ENCODE measurements at regions of chr1 and their contacts with region 1.

Region 1: DNA sequence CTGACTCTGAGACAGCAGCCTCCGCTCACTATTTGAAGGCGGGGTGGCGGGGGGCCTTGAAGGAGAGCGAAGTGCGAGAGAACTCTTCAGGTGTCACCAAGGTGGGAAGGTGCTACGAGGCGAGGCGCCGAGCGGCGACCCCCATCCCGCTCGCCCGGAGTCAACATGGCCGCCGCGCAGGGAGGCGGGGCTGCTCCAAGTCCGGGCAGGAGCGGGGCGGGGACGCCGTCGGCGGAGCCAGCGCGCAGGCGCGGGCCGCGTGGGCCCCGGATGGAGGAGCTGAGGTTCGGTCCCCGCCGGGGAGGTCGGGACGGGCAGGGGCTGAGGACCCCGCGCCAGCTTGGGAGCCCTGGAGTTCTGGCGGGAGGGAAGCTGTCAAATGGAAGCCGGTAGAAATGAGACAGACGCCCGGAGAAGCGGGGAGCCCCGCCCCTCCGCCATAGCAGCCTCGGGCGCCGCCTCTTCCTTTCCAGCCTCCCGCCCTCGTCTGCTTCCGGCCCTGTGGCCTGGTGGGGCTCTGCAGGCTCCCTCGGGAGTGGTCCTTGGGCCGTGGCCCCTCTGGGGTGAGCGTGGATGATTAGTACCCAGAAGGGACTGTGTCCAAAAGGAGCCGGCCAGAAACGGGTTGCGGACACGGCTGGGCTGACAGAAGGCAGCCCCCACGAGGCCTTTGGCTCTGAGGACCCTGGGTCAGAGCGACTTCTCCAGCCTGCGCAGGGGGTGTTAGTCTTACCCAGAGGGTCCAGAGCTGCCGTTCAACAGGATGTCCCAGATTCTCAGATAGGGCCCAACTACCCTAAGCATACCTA is at the start of gene PIGV:
- DNase-seq: peak; percentile 28
- H3K4me3 ChIP-seq: peak within 1 kb of the TSS; percentile 59 to 92 (median 78)
- H3K27ac ChIP-seq: peak within 1 kb of the TSS; percentile 98 to 100 (median 98)
- H3K4me1 ChIP-seq: peaks cover 28 to 64% (median 38%) of the 10 kb centered on the region in 3 donors
- H3K27me3 ChIP-seq: no peaks in the 10 kb centered on the region
- CTCF ChIP-seq: peak in 5 of 6 experiments; percentile 15 to 59 (median 46)
- POLR2A ChIP-seq: peak in 2 of 4 donors; percentile 54 to 73
- total RNA-seq, gene PIGV: 9.9 to 20.9 (median 13.1) TPM

Region 2: DNA sequence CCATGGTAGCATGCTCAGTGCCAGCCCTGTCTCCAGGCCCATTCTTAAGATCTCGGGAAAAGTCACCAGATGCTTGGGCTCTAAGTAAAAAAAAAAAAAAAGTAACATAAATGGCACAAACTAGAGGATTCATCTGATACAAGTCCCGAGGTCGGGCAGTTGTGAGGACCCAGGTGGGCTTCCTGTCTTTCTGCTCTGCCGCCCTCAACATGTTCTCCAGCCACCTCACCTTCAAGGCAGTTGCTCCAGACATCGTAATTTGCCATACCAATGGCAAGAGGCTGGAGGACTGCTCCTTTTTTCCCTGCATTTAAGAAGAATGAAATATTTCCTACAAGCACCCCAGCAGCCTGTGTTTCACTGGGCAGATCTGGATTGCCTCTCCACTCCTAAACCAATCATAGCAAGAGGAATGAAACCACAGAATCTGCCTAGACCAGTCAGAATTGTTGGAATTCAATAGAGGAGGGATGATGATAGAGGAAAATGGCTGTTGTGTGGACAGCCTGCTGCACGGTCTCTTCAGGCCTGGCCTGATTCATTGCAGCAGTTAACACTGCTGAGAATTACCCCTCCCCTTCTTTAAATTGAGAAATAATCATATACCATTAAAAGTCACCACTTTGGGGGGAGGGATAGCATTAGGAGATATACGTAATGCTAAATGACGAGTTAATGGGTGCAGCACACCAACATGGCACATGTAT is 310.3 kb before region 1 on chr1:
- intact Hi-C with region 1: no loop called
- DNase-seq: no peak
- H3K4me3 ChIP-seq: no peak overlapping the region
- H3K27ac ChIP-seq: no peak overlapping the region
- H3K4me1 ChIP-seq: peaks cover 8 to 17% (median 10%) of the 10 kb centered on the region in 3 donors
- H3K27me3 ChIP-seq: no peaks in the 10 kb centered on the region
- CTCF ChIP-seq: no peak
- POLR2A ChIP-seq: no peak

Region 3: DNA sequence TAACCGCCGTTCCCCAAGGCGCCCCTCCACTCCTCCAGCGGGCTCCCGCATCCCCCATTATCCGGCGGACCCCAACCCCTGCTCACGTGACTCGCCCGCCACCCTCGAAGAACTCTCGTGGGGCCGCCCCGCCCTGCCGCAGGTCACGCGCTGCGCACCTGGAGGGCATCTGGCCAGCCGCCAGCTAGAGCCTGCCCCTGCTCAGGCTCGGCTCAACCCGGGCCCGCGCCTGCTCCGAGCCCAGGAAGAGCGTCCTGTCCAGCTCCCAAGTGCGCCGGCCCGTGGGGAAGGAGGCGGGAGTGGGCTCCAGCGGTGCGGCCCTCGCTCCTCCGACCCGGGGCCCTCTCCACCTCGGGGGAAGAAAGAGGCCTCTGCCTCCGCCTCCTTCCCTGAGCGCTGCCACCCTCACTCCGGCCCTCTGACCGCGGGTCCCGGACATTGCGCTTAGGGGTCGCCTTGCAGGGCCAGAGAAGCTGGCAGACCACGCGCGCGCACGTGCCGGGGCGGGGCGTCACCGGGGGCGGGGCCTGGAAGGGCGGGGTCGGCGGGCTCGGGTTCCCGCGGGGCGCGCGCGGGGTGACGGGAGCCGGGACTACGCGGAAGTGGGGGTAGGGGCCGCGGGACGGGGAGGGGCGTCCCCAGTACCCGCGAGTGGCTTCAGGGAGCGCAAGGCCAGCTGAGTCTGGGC is 287.3 kb before region 1 on chr1:
- intact Hi-C with region 1: loop called (anchors 10 kb)
- DNase-seq: peak; percentile 66
- H3K4me3 ChIP-seq: peak overlapping the region; percentile 71 to 78 (median 74)
- H3K27ac ChIP-seq: peak overlapping the region; percentile 91 to 96 (median 94)
- H3K4me1 ChIP-seq: peaks cover 0 to 21% (median 10%) of the 10 kb centered on the region in 3 donors
- H3K27me3 ChIP-seq: no peaks in the 10 kb centered on the region
- CTCF ChIP-seq: no peak
- POLR2A ChIP-seq: peak in 2 of 4 donors; percentile 57 to 66

Region 4: GRCh38 chr1:26602378-26602959 is 185.4 kb before region 1 on chr1:
- intact Hi-C with region 1: loop called (anchors 2 kb)
- DNase-seq: no peak
- H3K4me3 ChIP-seq: no peak overlapping the region
- H3K27ac ChIP-seq: no peak overlapping the region
- H3K4me1 ChIP-seq: peaks cover 0 to 19% (median 4%) of the 10 kb centered on the region in 3 donors
- H3K27me3 ChIP-seq: peaks cover 0 to 28% (median 0%) of the 10 kb centered on the region in 4 donors
- CTCF ChIP-seq: peak; percentile 76 to 94 (median 88)
- POLR2A ChIP-seq: no peak

Region 5: DNA sequence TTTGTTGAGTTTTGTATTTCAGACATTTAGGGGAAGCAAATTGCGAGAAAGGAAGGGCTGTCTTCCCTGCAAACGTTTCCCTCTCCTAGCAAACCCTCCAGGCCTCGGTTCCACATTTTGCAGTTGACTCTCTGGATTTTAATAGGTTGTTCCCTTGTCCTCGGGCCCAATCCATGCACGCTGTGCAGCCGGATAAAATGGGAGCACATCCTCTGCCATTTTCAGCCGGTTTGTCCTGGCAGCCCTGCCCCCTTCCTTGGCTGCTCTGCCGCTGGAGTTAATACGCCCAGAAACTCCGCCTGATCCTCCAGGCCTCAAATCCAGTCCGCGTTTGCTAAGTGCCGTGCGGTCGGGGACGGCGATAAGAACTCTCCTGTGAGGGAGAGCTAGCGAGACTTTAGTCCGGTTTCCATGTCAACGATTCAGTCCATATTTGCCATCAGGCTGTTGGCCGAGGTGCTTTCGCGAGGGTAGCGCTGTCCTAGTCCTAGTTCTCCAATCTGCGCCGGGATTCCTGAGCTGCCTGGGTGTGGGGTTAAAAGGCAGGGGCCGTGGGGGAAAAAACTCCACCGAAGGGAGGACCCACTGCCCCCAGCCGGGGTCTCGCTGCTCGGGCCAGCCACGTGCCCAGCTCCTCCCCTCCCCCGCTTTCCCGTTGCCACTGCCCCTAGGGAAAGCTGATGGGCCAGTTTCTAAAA is 95.0 kb before region 1 on chr1:
- intact Hi-C with region 1: loop called (anchors 5 kb)
- DNase-seq: peak; percentile 66
- H3K4me3 ChIP-seq: peak overlapping the region; percentile 51 to 74 (median 64)
- H3K27ac ChIP-seq: peak overlapping the region; percentile 93 to 99 (median 98)
- H3K4me1 ChIP-seq: peaks cover 20 to 43% (median 27%) of the 10 kb centered on the region in 3 donors
- H3K27me3 ChIP-seq: no peaks in the 10 kb centered on the region
- CTCF ChIP-seq: peak in 2 of 6 experiments; percentile 5 to 6
- POLR2A ChIP-seq: peak in 1 of 4 donors; percentile 55

Region 6: DNA sequence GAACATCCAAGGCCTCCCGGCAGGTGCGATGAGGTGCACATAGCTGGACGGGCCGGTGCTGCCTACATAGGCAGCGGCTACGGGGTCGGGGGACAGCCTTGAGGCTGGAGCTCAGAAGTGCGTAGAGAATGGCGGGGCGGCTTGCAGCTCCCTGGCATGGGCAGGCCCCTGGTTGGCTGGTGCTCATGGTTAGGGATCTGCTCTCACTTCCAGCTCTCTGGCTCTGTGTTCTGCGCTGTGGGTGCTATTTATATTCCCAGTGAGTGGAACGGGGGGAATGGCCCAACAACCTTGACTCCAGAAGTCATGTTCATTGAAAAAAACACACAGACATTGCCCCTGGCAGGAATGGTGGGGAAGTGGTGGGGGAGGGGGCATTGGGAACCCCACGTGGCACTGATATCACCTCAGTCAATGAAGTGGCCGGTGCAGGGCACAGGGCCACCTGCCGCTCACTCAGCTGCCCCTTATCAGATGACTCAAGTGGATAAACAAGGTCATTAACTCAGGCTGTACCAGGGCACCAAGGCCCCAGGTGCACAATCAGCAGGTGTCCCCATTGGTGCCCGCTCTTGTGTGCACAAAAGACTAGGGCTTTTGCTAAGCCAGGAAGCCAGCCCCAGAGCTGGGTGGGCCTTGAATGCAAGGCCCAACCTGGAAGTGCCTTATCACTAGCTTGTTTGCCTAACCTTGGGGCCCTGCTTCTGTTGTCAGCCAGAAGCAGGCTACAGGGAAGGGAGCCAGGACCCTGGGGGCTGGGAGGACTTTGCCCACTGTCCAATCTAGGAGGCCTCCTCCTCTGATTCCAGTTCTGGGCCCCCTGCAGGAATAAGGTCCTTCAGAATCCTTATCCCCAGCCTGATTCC is 126.1 kb after region 1 on chr1 and contains the start of gene NR0B2:
- intact Hi-C with region 1: no loop called
- DNase-seq: no peak
- H3K4me3 ChIP-seq: no peak within 1 kb of the TSS
- H3K27ac ChIP-seq: no peak within 1 kb of the TSS
- H3K4me1 ChIP-seq: no peaks in the 10 kb centered on the region
- H3K27me3 ChIP-seq: no peaks in the 10 kb centered on the region
- CTCF ChIP-seq: no peak
- POLR2A ChIP-seq: no peak
- total RNA-seq, gene NR0B2: not detected

Region 7: GRCh38 chr1:27388337-27389005 is 600.6 kb after region 1 on chr1:
- intact Hi-C with region 1: no loop called
- DNase-seq: no peak
- H3K4me3 ChIP-seq: no peak overlapping the region
- H3K27ac ChIP-seq: peak overlapping the region in 1 of 4 donors; percentile 17
- H3K4me1 ChIP-seq: peaks cover 14 to 35% (median 15%) of the 10 kb centered on the region in 3 donors
- H3K27me3 ChIP-seq: no peaks in the 10 kb centered on the region
- CTCF ChIP-seq: peak; percentile 92 to 97 (median 94)
- POLR2A ChIP-seq: no peak